T-cell (primary cell): ENCODE measurements at regions of chr2 and their contacts with region 1.

Region 1: DNA sequence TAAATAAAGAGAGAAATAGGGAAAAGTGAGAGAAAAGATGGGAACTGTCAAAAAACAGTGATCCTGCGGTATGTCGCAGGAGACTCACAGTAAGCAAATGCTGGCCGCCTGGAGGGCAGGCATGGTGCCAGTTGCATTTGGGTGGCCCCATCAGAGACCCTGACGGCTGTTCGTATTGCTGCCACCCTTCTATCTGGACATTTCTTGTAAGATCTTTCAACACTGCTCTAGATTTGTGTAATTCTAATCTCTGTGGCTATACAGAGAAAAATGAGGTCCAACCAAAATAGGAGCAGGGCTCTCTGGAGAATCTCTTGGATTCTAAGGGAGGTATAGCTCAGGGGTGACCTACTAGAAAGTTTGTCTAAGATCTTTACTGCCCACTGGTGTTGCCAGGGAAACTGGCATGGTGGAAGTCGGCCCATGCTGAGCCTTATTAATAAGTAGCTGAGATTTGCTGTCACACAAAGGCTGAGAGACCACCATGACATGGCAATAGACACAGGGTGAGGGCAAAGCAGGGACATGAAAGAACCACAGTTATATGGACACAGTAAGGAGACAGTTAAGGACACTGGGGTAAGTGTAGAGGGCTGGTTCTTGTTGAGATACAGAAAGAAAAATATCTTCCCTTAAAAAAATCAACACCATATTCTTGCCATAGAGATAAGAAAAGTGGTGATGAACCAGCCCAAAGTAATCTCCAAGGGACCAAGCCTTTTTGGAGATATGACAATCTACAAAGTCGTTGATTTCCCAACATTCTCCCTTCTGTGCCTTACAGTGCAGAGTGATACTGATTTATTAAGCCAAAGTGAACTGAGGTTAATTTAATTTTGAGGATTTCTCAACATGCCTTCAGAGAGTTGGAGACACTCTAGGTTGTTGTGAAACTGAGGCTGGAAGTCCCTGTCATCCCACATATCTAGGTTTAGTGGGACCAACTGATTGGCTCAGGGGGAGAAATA is 26.4 kb upstream of the FZD7 start:
- DNase-seq: no peak
- ATAC-seq: no peak
- H3K4me3 ChIP-seq: no peak overlapping the region
- H3K4me3 Mint-ChIP-seq: no peak overlapping the region
- H3K27ac ChIP-seq: no peak overlapping the region
- H3K27ac Mint-ChIP-seq: no peak overlapping the region
- H3K4me1 ChIP-seq: no peaks in the 10 kb centered on the region
- H3K4me1 Mint-ChIP-seq: no peaks in the 10 kb centered on the region
- H3K27me3 ChIP-seq: peaks cover 0 to 12% of the 10 kb centered on the region in 2 experiments
- H3K27me3 Mint-ChIP-seq: peaks cover 10 to 19% of the 10 kb centered on the region in 2 donors

Region 2: DNA sequence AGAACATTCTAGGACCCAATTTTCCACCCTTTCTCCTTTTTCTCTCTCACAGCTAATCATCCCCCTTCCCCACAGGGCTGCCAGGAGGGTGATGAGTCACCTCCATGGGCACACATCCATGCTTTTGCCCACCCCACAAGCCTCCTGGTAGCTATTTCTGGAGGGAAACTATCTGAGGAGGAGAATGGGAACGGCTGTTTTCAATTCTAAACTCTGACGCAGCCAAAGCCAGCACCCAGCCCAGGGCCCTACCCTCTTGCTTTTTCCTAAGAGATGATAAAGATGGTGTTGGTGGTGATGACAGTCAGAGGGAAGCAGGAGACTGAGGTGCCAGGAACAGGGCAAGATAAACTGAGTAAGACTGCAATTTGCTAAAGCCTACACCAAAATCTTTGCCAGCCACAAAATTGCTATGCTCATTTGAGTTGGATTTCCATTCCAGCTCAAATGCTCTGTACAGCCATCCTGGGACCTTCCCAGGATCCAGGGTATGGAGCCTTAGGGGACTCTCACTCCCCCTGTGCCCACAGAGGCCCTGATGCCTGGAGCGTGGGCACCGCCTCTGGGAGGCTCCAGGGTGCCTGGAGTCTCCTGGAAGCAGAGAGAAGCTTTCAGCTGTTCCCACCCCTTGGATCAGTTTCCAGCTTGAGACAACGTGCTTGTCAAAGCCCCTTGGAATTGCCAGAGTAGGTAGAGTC is 35.6 kb before region 1 on chr2:
- CTCF ChIA-PET with region 1: no interaction called
- POLR2A ChIA-PET with region 1: no interaction called
- DNase-seq: no peak
- ATAC-seq: no peak
- H3K4me3 ChIP-seq: no peak overlapping the region
- H3K4me3 Mint-ChIP-seq: no peak overlapping the region
- H3K27ac ChIP-seq: no peak overlapping the region
- H3K27ac Mint-ChIP-seq: no peak overlapping the region
- H3K4me1 ChIP-seq: no peaks in the 10 kb centered on the region
- H3K4me1 Mint-ChIP-seq: no peaks in the 10 kb centered on the region
- H3K27me3 ChIP-seq: peaks cover 0 to 27% of the 10 kb centered on the region in 2 experiments
- H3K27me3 Mint-ChIP-seq: peaks cover 2 to 20% of the 10 kb centered on the region in 2 donors

Region 3: GRCh38 chr2:202299712-202300111 is 292.4 kb after region 1 on chr2:
- CTCF ChIA-PET with region 1: no interaction called
- POLR2A ChIA-PET with region 1: interaction called in 1 of 2 experiments, 14 read pairs
- DNase-seq: no peak
- ATAC-seq: no peak
- H3K4me3 ChIP-seq: no peak overlapping the region
- H3K4me3 Mint-ChIP-seq: no peak overlapping the region
- H3K27ac ChIP-seq: no peak overlapping the region
- H3K27ac Mint-ChIP-seq: peak overlapping the region in 1 of 2 donors; percentile 4
- H3K4me1 ChIP-seq: no peaks in the 10 kb centered on the region
- H3K4me1 Mint-ChIP-seq: peaks cover 0 to 6% (median 0%) of the 10 kb centered on the region in 3 donors
- H3K27me3 ChIP-seq: no peaks in the 10 kb centered on the region
- H3K27me3 Mint-ChIP-seq: no peaks in the 10 kb centered on the region